Thyroid gland (tissue), 4 donors: ENCODE measurements at regions of chr2 and their contacts with region 1.

Region 1: GRCh38 chr2:43537137-43537536 is 58.7 kb downstream of the THADA start:
- DNase-seq: no peak
- H3K4me3 ChIP-seq: no peak overlapping the region
- H3K27ac ChIP-seq: no peak overlapping the region
- H3K4me1 ChIP-seq: no peaks in the 10 kb centered on the region
- H3K27me3 ChIP-seq: no peaks in the 10 kb centered on the region
- CTCF ChIP-seq: no peak
- POLR2A ChIP-seq: no peak

Region 2: GRCh38 chr2:42964439-42965083 is 572.6 kb before region 1 on chr2:
- intact Hi-C with region 1: loop called (anchors 10 kb)
- DNase-seq: peak; percentile 25 to 39
- H3K4me3 ChIP-seq: no peak overlapping the region
- H3K27ac ChIP-seq: peak overlapping the region in 1 of 3 donors; percentile 38
- H3K4me1 ChIP-seq: peaks cover 14 to 38% of the 10 kb centered on the region in 2 donors
- H3K27me3 ChIP-seq: no peaks in the 10 kb centered on the region
- CTCF ChIP-seq: no peak
- POLR2A ChIP-seq: no peak